Activated CD4-positive, alpha-beta T cell treated with anti-CD3 and anti-CD28 coated beads, Interleukin-2, amount 10 ng/mL, durations not matched to agents 24 days and 14 days (primary cell): ENCODE measurements at regions of chr5 and their contacts with region 1.

Region 1: DNA sequence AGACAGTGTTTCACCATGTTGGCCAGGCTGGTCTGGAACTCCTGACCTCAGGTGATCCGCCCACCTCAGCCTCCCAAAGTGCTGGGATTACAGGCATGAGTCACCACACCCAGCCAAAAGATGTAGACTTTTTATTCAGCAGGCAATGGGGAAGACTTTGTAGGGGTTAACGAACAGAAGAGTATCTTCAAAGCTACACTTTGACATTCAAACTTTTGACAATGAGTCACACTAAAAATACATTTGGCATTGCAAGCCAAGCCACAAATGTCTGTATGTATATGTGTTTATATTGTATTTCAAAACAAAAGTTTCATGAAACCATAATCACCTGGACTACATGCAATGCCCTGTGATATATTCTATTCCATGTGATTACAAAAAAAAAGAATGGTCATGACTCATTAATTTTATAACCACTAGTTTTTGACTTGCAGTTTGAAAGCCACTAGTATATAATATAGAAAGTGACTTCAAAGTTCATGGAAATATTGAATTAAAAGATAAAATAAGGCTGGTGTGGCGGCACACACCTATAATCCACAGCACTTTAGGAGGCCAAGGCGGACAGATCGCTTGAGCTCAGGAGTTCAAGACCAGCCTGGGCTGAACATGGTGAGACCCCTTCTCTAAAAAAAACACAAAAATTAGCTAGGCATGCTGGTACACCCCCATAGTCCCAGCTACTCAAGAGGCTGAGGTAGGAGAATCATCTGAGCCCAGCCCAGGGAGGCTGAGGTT is 8.3 kb downstream of the DIMT1 start:
- DNase-seq: no peak
- H3K4me3 Mint-ChIP-seq: no peak overlapping the region
- H3K27ac Mint-ChIP-seq: peak overlapping the region; percentile 86
- H3K4me1 Mint-ChIP-seq: peaks cover 28% of the 10 kb centered on the region
- H3K27me3 Mint-ChIP-seq: no peaks in the 10 kb centered on the region

Region 2: DNA sequence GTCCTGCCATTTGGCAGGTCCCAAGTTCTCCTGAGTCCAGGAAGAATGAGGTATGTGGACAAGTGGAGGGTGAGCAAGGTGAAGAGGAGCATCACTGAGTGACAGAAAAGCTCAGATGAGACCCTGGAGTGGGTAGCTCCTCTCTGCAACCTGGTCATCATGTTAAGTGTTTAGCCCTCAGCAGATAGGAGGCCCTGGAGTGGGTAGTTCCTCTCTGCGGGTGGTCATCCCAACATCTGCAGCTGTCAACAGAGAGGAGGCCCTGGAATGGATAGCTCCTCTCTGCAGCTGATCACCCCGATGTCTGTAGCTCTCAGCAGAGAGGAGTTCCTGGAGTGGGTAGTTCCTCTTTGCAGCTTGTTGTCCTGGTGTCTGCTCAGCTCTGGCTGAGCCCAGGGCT is 1402.0 kb before region 1 on chr5:
- intact Hi-C with region 1: no loop called
- DNase-seq: no peak
- H3K4me3 Mint-ChIP-seq: no peak overlapping the region
- H3K27ac Mint-ChIP-seq: no peak overlapping the region
- H3K4me1 Mint-ChIP-seq: no peaks in the 10 kb centered on the region
- H3K27me3 Mint-ChIP-seq: no peaks in the 10 kb centered on the region

Region 3: GRCh38 chr5:62354028-62354874 is 41.1 kb before region 1 on chr5:
- intact Hi-C with region 1: loop called (anchors 5 kb)
- DNase-seq: peak; percentile 72
- H3K4me3 Mint-ChIP-seq: no peak overlapping the region
- H3K27ac Mint-ChIP-seq: no peak overlapping the region
- H3K4me1 Mint-ChIP-seq: peaks cover 9% of the 10 kb centered on the region
- H3K27me3 Mint-ChIP-seq: no peaks in the 10 kb centered on the region

Region 4: GRCh38 chr5:62369039-62369438 is 26.3 kb before region 1 on chr5:
- intact Hi-C with region 1: loop called (anchors 2 kb)
- DNase-seq: no peak
- H3K4me3 Mint-ChIP-seq: no peak overlapping the region
- H3K27ac Mint-ChIP-seq: peak overlapping the region; percentile 68
- H3K4me1 Mint-ChIP-seq: peaks cover 8% of the 10 kb centered on the region
- H3K27me3 Mint-ChIP-seq: no peaks in the 10 kb centered on the region

Region 5: GRCh38 chr5:62376064-62376463 is 19.3 kb before region 1 on chr5:
- intact Hi-C with region 1: loop called (anchors 2 kb)
- DNase-seq: no peak
- H3K4me3 Mint-ChIP-seq: no peak overlapping the region
- H3K27ac Mint-ChIP-seq: no peak overlapping the region
- H3K4me1 Mint-ChIP-seq: peaks cover 4% of the 10 kb centered on the region
- H3K27me3 Mint-ChIP-seq: no peaks in the 10 kb centered on the region

Region 6: DNA sequence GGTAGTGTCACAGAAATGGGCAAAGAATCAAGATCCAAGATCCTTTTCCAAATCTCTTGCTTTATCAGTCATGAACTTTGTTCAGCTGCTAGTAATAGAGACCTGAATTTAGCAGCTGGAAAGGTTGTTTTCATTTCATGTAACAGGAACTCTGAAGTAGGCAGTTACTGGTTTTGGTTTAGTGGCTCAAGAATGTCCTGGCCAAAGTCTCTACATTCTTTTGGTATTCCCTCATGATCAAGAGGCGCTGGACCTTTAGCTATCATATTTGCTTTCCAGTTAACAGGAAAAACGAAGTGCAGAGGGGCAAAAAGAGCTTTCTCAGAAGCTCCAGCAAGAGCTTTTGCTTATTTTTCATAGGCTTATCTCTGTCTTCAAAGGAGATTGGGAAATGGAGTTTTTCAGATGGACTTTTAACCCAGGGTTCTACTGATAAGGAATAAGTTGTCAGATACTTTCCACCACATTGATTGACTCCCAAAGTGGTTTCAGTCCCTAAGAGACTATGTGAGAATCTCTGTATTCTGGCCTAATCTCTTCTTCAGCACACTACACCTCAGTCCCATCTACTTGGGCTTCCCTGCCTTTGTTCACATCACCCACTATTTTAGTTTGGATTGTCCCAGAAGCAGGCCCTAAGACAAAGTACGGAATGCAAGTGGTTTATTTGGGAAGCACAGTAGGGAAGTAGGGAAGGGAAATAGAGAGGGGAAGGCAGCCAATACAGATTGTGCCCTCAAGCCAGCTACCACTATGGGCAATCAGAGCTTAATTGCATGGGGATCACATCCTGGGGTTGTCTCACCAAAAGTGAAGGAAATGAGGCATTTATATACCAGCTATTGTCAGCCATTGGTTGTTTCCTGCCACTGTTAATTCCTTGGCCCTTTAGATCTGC is 542.5 kb after region 1 on chr5:
- intact Hi-C with region 1: no loop called
- DNase-seq: no peak
- H3K4me3 Mint-ChIP-seq: no peak overlapping the region
- H3K27ac Mint-ChIP-seq: no peak overlapping the region
- H3K4me1 Mint-ChIP-seq: no peaks in the 10 kb centered on the region
- H3K27me3 Mint-ChIP-seq: no peaks in the 10 kb centered on the region